Gastrocnemius medialis (tissue), 4 donors: ENCODE measurements at regions of chr9 and their contacts with region 1.

Region 1: DNA sequence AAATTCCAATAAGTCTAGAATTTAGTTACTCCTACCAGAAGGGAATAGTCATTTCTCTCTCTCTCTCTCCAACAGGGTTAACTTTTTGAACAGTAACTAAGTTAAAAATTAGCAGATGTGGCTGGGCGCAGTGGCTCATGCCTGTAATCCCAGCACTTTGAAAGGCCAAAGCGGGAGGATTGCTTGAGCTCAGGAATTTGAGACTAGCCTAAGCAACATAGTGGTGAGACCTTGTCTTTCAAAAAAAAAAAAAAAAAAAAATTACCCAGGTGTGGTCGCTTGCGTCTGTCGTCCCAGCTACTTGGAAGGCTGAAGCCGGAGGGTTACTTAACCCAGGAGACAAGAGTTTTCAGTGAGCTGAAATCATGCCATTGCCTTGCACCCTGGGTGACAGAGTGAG is 639.7 kb downstream of the PTPRD start:
- DNase-seq: no peak
- ATAC-seq: no peak
- H3K4me3 ChIP-seq: no peak overlapping the region
- H3K27ac ChIP-seq: no peak overlapping the region
- H3K4me1 ChIP-seq: no peaks in the 10 kb centered on the region
- H3K27me3 ChIP-seq: no peaks in the 10 kb centered on the region
- CTCF ChIP-seq: no peak
- POLR2A ChIP-seq: no peak

Region 2: GRCh38 chr9:9904041-9904440 is 69.0 kb before region 1 on chr9:
- in situ Hi-C with region 1: no loop called
- intact Hi-C with region 1: no loop called
- DNase-seq: no peak
- ATAC-seq: no peak
- H3K4me3 ChIP-seq: no peak overlapping the region
- H3K27ac ChIP-seq: no peak overlapping the region
- H3K4me1 ChIP-seq: no peaks in the 10 kb centered on the region
- H3K27me3 ChIP-seq: no peaks in the 10 kb centered on the region
- CTCF ChIP-seq: no peak
- POLR2A ChIP-seq: no peak

Region 3: GRCh38 chr9:10008101-10008799 is 35.2 kb after region 1 on chr9:
- in situ Hi-C with region 1: no loop called
- intact Hi-C with region 1: loop called (anchors 5 kb)
- DNase-seq: no peak
- ATAC-seq: no peak
- H3K4me3 ChIP-seq: no peak overlapping the region
- H3K27ac ChIP-seq: no peak overlapping the region
- H3K4me1 ChIP-seq: no peaks in the 10 kb centered on the region
- H3K27me3 ChIP-seq: no peaks in the 10 kb centered on the region
- CTCF ChIP-seq: no peak
- POLR2A ChIP-seq: no peak